ENCODE measurements at regions of chr2 and their contacts with region 1.

Region 1: DNA sequence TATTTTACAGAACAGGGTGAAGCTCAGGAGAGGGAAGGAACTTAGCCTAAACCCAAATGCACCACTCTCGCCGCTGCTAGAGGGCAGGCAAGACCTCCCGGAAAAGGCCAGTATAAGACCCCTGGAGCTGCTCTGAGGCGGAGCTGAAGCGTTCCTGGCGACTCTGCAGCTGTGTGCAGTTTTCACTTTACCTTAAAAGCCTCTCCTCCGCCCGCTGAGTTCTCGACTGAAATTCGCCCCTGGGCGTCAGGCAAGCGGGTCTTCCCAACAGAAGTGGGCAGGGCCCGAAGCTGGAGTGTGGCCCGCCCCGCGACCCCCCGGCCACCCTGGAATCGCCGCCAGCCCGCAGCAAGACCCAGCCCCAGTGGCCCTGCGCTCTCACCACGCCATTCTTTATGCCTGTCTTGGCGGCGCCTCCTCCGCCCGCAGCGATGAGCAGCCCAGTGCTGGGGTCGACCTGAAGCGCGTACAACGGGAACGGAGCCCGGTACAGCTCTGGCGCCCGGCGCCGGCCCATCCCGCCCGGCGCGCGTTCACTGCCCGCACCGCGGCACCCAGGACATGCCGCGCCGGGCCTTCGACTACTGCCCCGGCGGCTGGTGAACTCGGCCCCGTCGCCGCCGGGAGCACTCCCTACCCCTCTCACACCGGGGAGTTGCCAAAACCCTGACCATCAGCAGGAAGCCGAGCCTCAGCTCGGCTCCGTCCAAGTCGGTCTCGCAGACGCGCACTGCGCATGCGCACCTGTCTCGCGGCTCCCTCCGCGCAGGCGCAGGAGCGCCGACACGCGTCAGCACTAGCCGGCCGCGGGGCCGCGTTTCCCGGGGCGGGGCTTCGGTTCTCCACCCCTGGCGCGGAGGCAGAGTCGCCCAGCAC is at the start of gene PREB:
- DNase-seq: peak; percentile 94 to 98 (median 98)
- H3K4me3 ChIP-seq: peak within 1 kb of the TSS; percentile 52 to 89
- H3K4me3 Mint-ChIP-seq: peak within 1 kb of the TSS; percentile 92 to 99 (median 96)
- H3K27ac ChIP-seq: peak within 1 kb of the TSS; percentile 92
- H3K27ac Mint-ChIP-seq: peak within 1 kb of the TSS; percentile 80 to 99 (median 98)
- H3K4me1 ChIP-seq: peaks cover 26% of the 10 kb centered on the region
- H3K4me1 Mint-ChIP-seq: peaks cover 12 to 36% (median 26%) of the 10 kb centered on the region in 4 donors
- H3K27me3 ChIP-seq: no peaks in the 10 kb centered on the region
- H3K27me3 Mint-ChIP-seq: no peaks in the 10 kb centered on the region
- total RNA-seq, gene PREB: 64.5 to 65.3 TPM

Region 2: DNA sequence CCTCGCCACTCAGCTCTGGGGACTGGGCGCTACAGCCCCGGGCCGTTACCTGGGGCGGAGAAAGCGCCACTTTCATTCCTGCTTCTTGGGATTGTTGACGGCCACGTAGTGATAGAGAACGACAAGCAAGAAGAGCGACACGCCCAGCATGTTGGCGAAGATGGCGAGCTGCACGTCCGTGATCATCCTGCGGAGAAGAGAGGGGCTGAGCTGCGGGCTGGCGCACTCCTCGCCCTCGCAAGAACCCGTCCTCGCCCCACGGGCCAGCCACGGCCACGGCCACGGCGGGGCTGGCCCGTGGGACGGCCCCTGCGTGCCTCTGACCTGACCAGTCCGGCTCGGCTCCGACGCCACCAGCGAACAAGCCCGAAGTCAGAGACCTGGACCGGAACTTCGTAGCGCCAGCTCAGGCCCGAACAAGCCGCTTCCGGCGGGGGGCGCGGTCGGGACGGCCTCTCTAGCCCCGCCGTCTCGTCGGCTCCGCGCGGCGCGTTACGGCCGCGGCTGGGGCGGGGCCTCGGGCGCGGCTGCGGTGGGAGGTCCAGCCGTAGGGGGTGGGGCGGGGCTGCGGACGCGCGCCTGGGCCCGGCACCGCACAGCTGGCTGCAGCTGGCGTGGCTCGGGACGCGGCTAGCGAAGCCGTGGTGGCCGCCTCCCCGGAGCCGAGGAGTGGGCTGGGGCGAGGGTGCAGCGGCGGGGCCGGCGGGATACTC is 62.7 kb before region 1 on chr2 and contains the start of gene OST4:
- CTCF ChIA-PET with region 1: no interaction called
- POLR2A ChIA-PET with region 1: interaction called, 12 read pairs
- intact Hi-C with region 1: no loop called
- DNase-seq: peak; percentile 87 to 91 (median 89)
- H3K4me3 ChIP-seq: peak within 1 kb of the TSS; percentile 95 to 97
- H3K4me3 Mint-ChIP-seq: peak within 1 kb of the TSS; percentile 92 to 98 (median 97)
- H3K27ac ChIP-seq: peak within 1 kb of the TSS; percentile 95
- H3K27ac Mint-ChIP-seq: peak within 1 kb of the TSS; percentile 93 to 99 (median 98)
- H3K4me1 ChIP-seq: peaks cover 62% of the 10 kb centered on the region
- H3K4me1 Mint-ChIP-seq: peaks cover 44 to 86% (median 70%) of the 10 kb centered on the region in 4 donors
- H3K27me3 ChIP-seq: no peaks in the 10 kb centered on the region
- H3K27me3 Mint-ChIP-seq: no peaks in the 10 kb centered on the region
- total RNA-seq, gene OST4: 269 to 296 TPM

Region 3: GRCh38 chr2:27086090-27086723 is 47.9 kb before region 1 on chr2:
- CTCF ChIA-PET with region 1: interaction called, 4 read pairs
- POLR2A ChIA-PET with region 1: interaction called, 7 read pairs
- intact Hi-C with region 1: loop called (anchors 1 kb)
- DNase-seq: peak; percentile 93 to 99 (median 98)
- H3K4me3 ChIP-seq: peak overlapping the region; percentile 11 to 75
- H3K4me3 Mint-ChIP-seq: peak overlapping the region; percentile 82 to 90 (median 86)
- H3K27ac ChIP-seq: peak overlapping the region; percentile 80
- H3K27ac Mint-ChIP-seq: peak overlapping the region; percentile 82 to 94 (median 89)
- H3K4me1 ChIP-seq: peaks cover 32% of the 10 kb centered on the region
- H3K4me1 Mint-ChIP-seq: peaks cover 9 to 37% (median 23%) of the 10 kb centered on the region in 4 donors
- H3K27me3 ChIP-seq: no peaks in the 10 kb centered on the region
- H3K27me3 Mint-ChIP-seq: no peaks in the 10 kb centered on the region

Region 4: GRCh38 chr2:27123302-27124231 is 10.6 kb before region 1 on chr2 and contains the start of gene ABHD1:
- CTCF ChIA-PET with region 1: interaction called, 26 read pairs
- POLR2A ChIA-PET with region 1: interaction called, 99 read pairs
- intact Hi-C with region 1: loop called (anchors 1 kb)
- DNase-seq: peak; percentile 49 to 76 (median 56)
- H3K4me3 ChIP-seq: peak within 1 kb of the TSS; percentile 55 to 70
- H3K4me3 Mint-ChIP-seq: peak within 1 kb of the TSS; percentile 82 to 96 (median 91)
- H3K27ac ChIP-seq: peak within 1 kb of the TSS; percentile 41
- H3K27ac Mint-ChIP-seq: peak within 1 kb of the TSS; percentile 77 to 92 (median 88)
- H3K4me1 ChIP-seq: peaks cover 18% of the 10 kb centered on the region
- H3K4me1 Mint-ChIP-seq: peaks cover 11 to 30% (median 18%) of the 10 kb centered on the region in 4 donors
- H3K27me3 ChIP-seq: peaks cover 5% of the 10 kb centered on the region
- H3K27me3 Mint-ChIP-seq: peaks cover 11 to 16% of the 10 kb centered on the region in 2 donors
- total RNA-seq, gene ABHD1: 1.3 to 2.1 TPM

Region 5: GRCh38 chr2:27211829-27212627 is 77.9 kb after region 1 on chr2 and contains the starts of genes ATRAID and SLC5A6:
- CTCF ChIA-PET with region 1: no interaction called
- POLR2A ChIA-PET with region 1: interaction called, 8 read pairs
- intact Hi-C with region 1: loop called (anchors 1 kb)
- DNase-seq: peak; percentile 89 to 93 (median 92)
- H3K4me3 ChIP-seq: peak within 1 kb of the TSS; percentile 71 to 94
- H3K4me3 Mint-ChIP-seq: peak within 1 kb of the TSS; percentile 95 to 100 (median 100)
- H3K27ac ChIP-seq: peak within 1 kb of the TSS; percentile 99
- H3K27ac Mint-ChIP-seq: peak within 1 kb of the TSS; percentile 97 to 100 (median 100)
- H3K4me1 ChIP-seq: peaks cover 22% of the 10 kb centered on the region
- H3K4me1 Mint-ChIP-seq: peaks cover 23 to 37% (median 31%) of the 10 kb centered on the region in 4 donors
- H3K27me3 ChIP-seq: no peaks in the 10 kb centered on the region
- H3K27me3 Mint-ChIP-seq: no peaks in the 10 kb centered on the region
- total RNA-seq, gene ATRAID: 103 to 109 TPM
- total RNA-seq, gene SLC5A6: 21.9 to 25.1 TPM

Region 6: DNA sequence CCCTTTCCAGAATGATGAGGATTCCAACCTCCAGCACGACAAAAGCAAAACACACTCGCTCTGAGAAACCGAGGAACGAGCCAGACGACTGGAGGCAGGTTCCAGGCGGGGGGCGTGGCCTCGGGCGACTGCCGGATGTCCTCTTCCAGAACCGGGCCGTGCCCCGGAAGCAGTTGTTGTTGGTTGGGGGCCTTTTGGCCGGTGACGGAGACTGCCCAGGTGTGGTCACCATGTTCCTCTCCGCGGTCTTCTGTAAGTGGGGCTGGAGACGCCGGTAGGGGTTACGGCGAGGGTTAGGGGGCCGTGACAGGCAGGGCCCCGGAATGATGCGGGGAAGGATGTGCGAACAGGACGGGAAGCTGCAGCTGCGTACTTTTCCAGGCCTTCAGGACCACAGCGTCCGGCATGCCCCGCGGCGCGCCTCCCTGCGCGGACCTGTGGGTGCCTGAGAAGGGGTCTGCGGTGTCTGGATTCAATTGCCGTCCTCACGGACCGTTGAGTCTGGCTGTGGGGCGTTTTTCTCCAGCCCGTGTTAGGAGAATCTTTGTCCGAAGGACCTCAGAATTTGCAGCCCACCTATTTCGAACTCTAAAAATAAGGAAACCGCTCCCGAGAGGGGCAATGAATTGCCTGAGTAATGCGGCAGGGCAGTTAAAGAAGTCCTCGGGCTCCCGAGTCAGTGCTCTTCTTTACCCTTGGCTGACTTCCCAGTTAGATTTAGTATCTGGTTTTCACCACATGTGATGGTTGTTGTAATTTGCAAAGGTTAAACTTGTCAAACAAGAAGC is 637.6 kb after region 1 on chr2 and contains the start of gene MRPL33:
- CTCF ChIA-PET with region 1: no interaction called
- POLR2A ChIA-PET with region 1: no interaction called
- intact Hi-C with region 1: loop called (anchors 10 kb)
- DNase-seq: peak; percentile 89 to 91 (median 89)
- H3K4me3 ChIP-seq: peak within 1 kb of the TSS; percentile 78
- H3K4me3 Mint-ChIP-seq: peak within 1 kb of the TSS; percentile 98 to 100 (median 99)
- H3K27ac ChIP-seq: peak within 1 kb of the TSS; percentile 86
- H3K27ac Mint-ChIP-seq: peak within 1 kb of the TSS; percentile 98 to 100 (median 100)
- H3K4me1 ChIP-seq: peaks cover 30% of the 10 kb centered on the region
- H3K4me1 Mint-ChIP-seq: peaks cover 31 to 56% (median 46%) of the 10 kb centered on the region in 4 donors
- H3K27me3 ChIP-seq: no peaks in the 10 kb centered on the region
- H3K27me3 Mint-ChIP-seq: peaks cover 0 to 2% of the 10 kb centered on the region in 2 donors
- total RNA-seq, gene MRPL33: 36.2 to 43.4 TPM